ENCODE measurements at regions of chr16 and their contacts with region 1.

Region 1: DNA sequence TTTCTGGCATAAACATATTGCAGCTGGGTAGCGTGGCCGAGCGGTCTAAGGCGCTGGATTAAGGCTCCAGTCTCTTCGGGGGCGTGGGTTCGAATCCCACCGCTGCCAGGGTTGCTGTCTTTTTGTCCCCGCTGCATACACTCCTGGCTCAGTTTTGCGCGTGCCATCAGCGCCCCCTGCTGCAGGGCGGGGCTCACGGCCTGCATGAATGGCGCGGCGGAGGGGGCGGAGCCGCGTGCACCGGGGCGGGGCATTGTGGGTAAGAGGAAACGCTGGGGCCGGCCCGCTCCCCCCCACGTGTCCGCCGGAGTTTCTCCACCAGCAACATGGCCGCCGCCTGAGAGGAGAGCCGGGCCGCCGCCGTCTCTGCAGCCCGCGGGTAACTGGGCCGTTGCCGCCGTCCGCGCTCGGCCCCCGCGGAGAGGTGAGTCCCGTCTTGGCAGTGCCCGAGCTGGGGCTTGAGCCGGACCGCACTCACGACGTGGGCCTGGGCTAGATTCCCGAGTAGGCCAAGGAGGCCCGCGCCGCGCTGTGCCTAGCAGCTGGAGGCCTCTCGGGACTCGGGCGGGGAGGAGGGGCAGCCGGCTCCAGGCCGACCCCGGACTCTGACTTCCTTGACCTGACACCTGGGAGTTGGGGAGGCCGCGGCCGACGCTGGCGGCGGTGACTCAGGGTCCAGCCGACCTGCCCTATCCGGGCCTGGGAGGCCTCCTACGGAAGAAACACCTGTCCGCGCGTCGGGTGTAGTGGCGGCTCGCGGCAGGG is at the start of gene POLR3E:
- DNase-seq: peak; percentile 99 to 100 (median 100)
- ATAC-seq: peak; percentile 77
- H3K4me3 ChIP-seq: peak within 1 kb of the TSS; percentile 66
- H3K4me3 Mint-ChIP-seq: peak within 1 kb of the TSS; percentile 96
- H3K27ac ChIP-seq: peak within 1 kb of the TSS; percentile 97 to 99
- H3K27ac Mint-ChIP-seq: peak within 1 kb of the TSS; percentile 99
- H3K4me1 ChIP-seq: peaks cover 45% of the 10 kb centered on the region
- H3K4me1 Mint-ChIP-seq: peaks cover 54% of the 10 kb centered on the region
- H3K27me3 ChIP-seq: no peaks in the 10 kb centered on the region
- H3K27me3 Mint-ChIP-seq: peaks cover 15% of the 10 kb centered on the region
- CTCF ChIP-seq: peak; percentile 91
- total RNA-seq, gene POLR3E: 239 to 242 TPM

Region 2: GRCh38 chr16:21646721-21647561 is 650.4 kb before region 1 on chr16:
- CTCF ChIA-PET with region 1: no interaction called
- POLR2A ChIA-PET with region 1: no interaction called
- intact Hi-C with region 1: loop called in 1 of 2 experiments (anchors 10 kb)
- DNase-seq: peak; percentile 50 to 90 (median 68)
- ATAC-seq: peak; percentile 79
- H3K4me3 ChIP-seq: peak overlapping the region; percentile 6
- H3K4me3 Mint-ChIP-seq: peak overlapping the region; percentile 75
- H3K27ac ChIP-seq: peak overlapping the region; percentile 66 to 82
- H3K27ac Mint-ChIP-seq: peak overlapping the region; percentile 91
- H3K4me1 ChIP-seq: peaks cover 59% of the 10 kb centered on the region
- H3K4me1 Mint-ChIP-seq: peaks cover 56% of the 10 kb centered on the region
- H3K27me3 ChIP-seq: no peaks in the 10 kb centered on the region
- H3K27me3 Mint-ChIP-seq: no peaks in the 10 kb centered on the region
- CTCF ChIP-seq: no peak

Region 3: GRCh38 chr16:22001591-22001990 is 295.7 kb before region 1 on chr16:
- CTCF ChIA-PET with region 1: interaction called, 5 read pairs
- POLR2A ChIA-PET with region 1: interaction called, 20 read pairs
- intact Hi-C with region 1: loop called (anchors 1 kb)
- DNase-seq: no peak
- ATAC-seq: no peak
- H3K4me3 ChIP-seq: no peak overlapping the region
- H3K4me3 Mint-ChIP-seq: no peak overlapping the region
- H3K27ac ChIP-seq: no peak overlapping the region
- H3K27ac Mint-ChIP-seq: no peak overlapping the region
- H3K4me1 ChIP-seq: peaks cover 9% of the 10 kb centered on the region
- H3K4me1 Mint-ChIP-seq: peaks cover 15% of the 10 kb centered on the region
- H3K27me3 ChIP-seq: no peaks in the 10 kb centered on the region
- H3K27me3 Mint-ChIP-seq: no peaks in the 10 kb centered on the region
- CTCF ChIP-seq: no peak

Region 4: DNA sequence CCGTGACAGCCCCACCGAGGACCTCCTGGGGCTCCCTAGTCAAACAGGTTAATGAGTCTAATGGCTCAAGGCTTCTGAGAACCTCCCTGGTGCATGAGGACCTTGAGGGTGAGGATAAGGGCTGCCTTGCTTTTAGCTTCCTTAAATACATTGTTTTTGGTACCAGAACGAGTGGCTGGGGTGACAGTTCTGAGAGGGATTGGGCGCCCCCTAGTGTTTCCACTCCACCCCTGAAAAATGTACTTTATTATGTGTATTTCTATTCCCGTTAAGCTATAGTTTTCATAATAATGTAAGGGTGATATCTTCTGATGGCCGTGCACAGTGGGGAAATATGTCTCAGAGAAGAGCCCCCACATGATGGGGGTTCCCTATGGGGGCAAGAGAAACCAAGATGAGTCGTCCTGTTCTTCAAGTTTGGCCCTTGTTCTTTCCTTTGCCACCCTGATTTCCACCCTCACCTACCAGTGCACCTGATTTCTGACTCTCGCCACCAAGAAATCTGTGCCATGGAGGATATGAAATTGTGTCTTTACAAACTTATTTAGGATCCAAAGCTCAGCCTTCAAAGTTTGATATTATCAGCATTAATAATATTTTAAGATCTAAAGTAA is 219.5 kb before region 1 on chr16:
- CTCF ChIA-PET with region 1: interaction called, 5 read pairs
- POLR2A ChIA-PET with region 1: no interaction called
- intact Hi-C with region 1: loop called (anchors 2 to 5 kb)
- DNase-seq: peak; percentile 56 to 83 (median 65)
- ATAC-seq: peak; percentile 76
- H3K4me3 ChIP-seq: no peak overlapping the region
- H3K4me3 Mint-ChIP-seq: no peak overlapping the region
- H3K27ac ChIP-seq: no peak overlapping the region
- H3K27ac Mint-ChIP-seq: no peak overlapping the region
- H3K4me1 ChIP-seq: peaks cover 6% of the 10 kb centered on the region
- H3K4me1 Mint-ChIP-seq: peaks cover 14% of the 10 kb centered on the region
- H3K27me3 ChIP-seq: no peaks in the 10 kb centered on the region
- H3K27me3 Mint-ChIP-seq: no peaks in the 10 kb centered on the region
- CTCF ChIP-seq: peak; percentile 89

Region 5: GRCh38 chr16:22240023-22240710 is 57.1 kb before region 1 on chr16:
- CTCF ChIA-PET with region 1: interaction called, 3 read pairs
- POLR2A ChIA-PET with region 1: interaction called, 4 read pairs
- intact Hi-C with region 1: loop called (anchors 2 kb)
- DNase-seq: no peak
- ATAC-seq: no peak
- H3K4me3 ChIP-seq: no peak overlapping the region
- H3K4me3 Mint-ChIP-seq: peak overlapping the region; percentile 11
- H3K27ac ChIP-seq: no peak overlapping the region
- H3K27ac Mint-ChIP-seq: peak overlapping the region; percentile 87
- H3K4me1 ChIP-seq: peaks cover 39% of the 10 kb centered on the region
- H3K4me1 Mint-ChIP-seq: peaks cover 34% of the 10 kb centered on the region
- H3K27me3 ChIP-seq: no peaks in the 10 kb centered on the region
- H3K27me3 Mint-ChIP-seq: no peaks in the 10 kb centered on the region
- CTCF ChIP-seq: no peak

Region 6: GRCh38 chr16:22397464-22397863 is 100.2 kb after region 1 on chr16:
- CTCF ChIA-PET with region 1: no interaction called
- POLR2A ChIA-PET with region 1: no interaction called
- intact Hi-C with region 1: no loop called
- DNase-seq: no peak
- ATAC-seq: no peak
- H3K4me3 ChIP-seq: no peak overlapping the region
- H3K4me3 Mint-ChIP-seq: no peak overlapping the region
- H3K27ac ChIP-seq: no peak overlapping the region
- H3K27ac Mint-ChIP-seq: no peak overlapping the region
- H3K4me1 ChIP-seq: no peaks in the 10 kb centered on the region
- H3K4me1 Mint-ChIP-seq: peaks cover 3% of the 10 kb centered on the region
- H3K27me3 ChIP-seq: no peaks in the 10 kb centered on the region
- H3K27me3 Mint-ChIP-seq: no peaks in the 10 kb centered on the region
- CTCF ChIP-seq: no peak

Region 7: GRCh38 chr16:22646948-22647556 is 349.8 kb after region 1 on chr16:
- CTCF ChIA-PET with region 1: no interaction called
- POLR2A ChIA-PET with region 1: no interaction called
- intact Hi-C with region 1: no loop called
- DNase-seq: no peak
- ATAC-seq: no peak
- H3K4me3 ChIP-seq: no peak overlapping the region
- H3K4me3 Mint-ChIP-seq: no peak overlapping the region
- H3K27ac ChIP-seq: no peak overlapping the region
- H3K27ac Mint-ChIP-seq: no peak overlapping the region
- H3K4me1 ChIP-seq: no peaks in the 10 kb centered on the region
- H3K4me1 Mint-ChIP-seq: no peaks in the 10 kb centered on the region
- H3K27me3 ChIP-seq: peaks cover 33 to 35% of the 10 kb centered on the region in 2 experiments
- H3K27me3 Mint-ChIP-seq: peaks cover 4% of the 10 kb centered on the region
- CTCF ChIP-seq: no peak

Measured in CD4-positive, alpha-beta T cell (primary cell).